Activated T-helper 1 cell treated with anti-CD3 and anti-CD28 coated beads, Interleukin-12 subunit alpha, Interleukin-12 subunit beta, Interleukin-2, Interleukin-4 antibody, amounts not matched to agents 30 ng/mL and 10 ng/mL and 1 ng/mL, durations not matched to agents 14 hours and 24 hours and 36 hours (primary cell): ENCODE measurements at regions of chrX and their contacts with region 1.

Region 1: DNA sequence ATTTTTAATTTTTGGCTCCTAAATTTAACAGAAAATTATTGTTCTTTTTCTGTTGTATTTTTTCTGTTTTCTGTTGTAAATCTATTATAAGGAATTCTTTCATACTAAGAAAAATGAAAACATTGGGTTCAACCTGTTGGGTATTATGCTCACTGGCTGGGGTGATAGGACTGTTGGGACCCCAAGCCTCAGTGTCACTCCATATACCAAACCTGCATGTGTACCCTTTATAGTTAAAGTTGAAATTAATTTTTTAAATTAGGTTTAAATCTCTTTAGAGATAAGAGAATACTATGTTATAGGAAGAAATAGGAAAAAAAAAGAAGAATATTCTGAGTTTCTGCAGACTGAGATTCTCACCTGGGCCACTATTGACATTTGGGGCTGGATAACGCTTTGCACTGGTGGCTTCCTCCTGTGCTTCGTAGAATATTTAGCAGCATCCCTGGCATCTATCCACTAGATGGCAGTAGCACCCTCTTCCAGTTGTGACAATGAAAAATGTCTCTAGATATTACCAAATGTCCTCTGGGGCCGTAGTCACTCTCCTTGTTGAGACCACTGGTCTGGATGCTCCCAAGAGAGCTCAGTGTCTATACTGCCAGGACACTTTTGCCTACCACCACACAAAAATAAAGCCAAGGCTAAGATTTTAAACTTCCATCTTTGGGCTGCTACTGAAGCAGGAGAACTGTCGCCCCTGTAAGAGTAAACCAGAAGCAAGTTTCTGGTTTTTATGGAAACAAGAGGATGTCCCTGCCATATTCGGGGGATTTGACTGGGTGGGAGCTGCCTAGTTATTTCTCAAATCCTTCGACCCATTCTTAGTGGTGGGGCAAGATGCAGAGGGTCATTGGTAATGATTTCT is 22.4 kb upstream of the CLTRN start:
- DNase-seq: peak; percentile 27
- H3K4me3 Mint-ChIP-seq: no peak overlapping the region
- H3K27ac Mint-ChIP-seq: no peak overlapping the region
- H3K4me1 Mint-ChIP-seq: peaks cover 9% of the 10 kb centered on the region
- H3K27me3 Mint-ChIP-seq: no peaks in the 10 kb centered on the region

Region 2: GRCh38 chrX:15468036-15468435 is 219.0 kb before region 1 on chrX:
- intact Hi-C with region 1: no loop called
- DNase-seq: no peak
- H3K4me3 Mint-ChIP-seq: no peak overlapping the region
- H3K27ac Mint-ChIP-seq: no peak overlapping the region
- H3K4me1 Mint-ChIP-seq: peaks cover 6% of the 10 kb centered on the region
- H3K27me3 Mint-ChIP-seq: no peaks in the 10 kb centered on the region

Region 3: GRCh38 chrX:15815779-15816437 is 128.9 kb after region 1 on chrX:
- intact Hi-C with region 1: loop called (anchors 5 kb)
- DNase-seq: peak; percentile 8
- H3K4me3 Mint-ChIP-seq: no peak overlapping the region
- H3K27ac Mint-ChIP-seq: peak overlapping the region; percentile 58
- H3K4me1 Mint-ChIP-seq: peaks cover 47% of the 10 kb centered on the region
- H3K27me3 Mint-ChIP-seq: no peaks in the 10 kb centered on the region

Region 4: DNA sequence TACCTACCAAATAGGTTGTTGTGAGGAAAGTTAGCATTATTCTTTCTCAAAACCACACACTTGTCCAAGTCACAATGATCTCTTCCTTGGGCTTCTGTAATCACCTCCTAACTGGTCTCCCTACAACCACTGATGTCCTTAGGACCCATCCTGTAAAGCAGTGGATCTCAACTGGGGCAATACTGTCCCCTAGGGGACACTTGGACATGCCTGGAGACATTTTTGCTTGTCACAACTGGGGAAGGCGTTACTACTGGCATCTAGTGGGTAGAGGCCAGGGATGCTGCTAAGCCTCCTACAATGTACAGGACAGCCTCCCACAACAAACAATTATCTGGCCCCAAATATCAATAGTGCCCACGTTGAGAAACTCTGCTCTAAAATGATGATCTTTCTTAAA is 286.2 kb after region 1 on chrX:
- intact Hi-C with region 1: loop called (anchors 2 kb)
- DNase-seq: no peak
- H3K4me3 Mint-ChIP-seq: no peak overlapping the region
- H3K27ac Mint-ChIP-seq: no peak overlapping the region
- H3K4me1 Mint-ChIP-seq: no peaks in the 10 kb centered on the region
- H3K27me3 Mint-ChIP-seq: no peaks in the 10 kb centered on the region

Region 5: GRCh38 chrX:16445166-16445752 is 758.2 kb after region 1 on chrX:
- intact Hi-C with region 1: loop called (anchors 5 kb)
- DNase-seq: peak; percentile 4
- H3K4me3 Mint-ChIP-seq: no peak overlapping the region
- H3K27ac Mint-ChIP-seq: no peak overlapping the region
- H3K4me1 Mint-ChIP-seq: no peaks in the 10 kb centered on the region
- H3K27me3 Mint-ChIP-seq: peaks cover 4% of the 10 kb centered on the region

Region 6: GRCh38 chrX:16695079-16695676 is 1008.1 kb after region 1 on chrX:
- intact Hi-C with region 1: loop called (anchors 10 kb)
- DNase-seq: peak; percentile 25
- H3K4me3 Mint-ChIP-seq: no peak overlapping the region
- H3K27ac Mint-ChIP-seq: no peak overlapping the region
- H3K4me1 Mint-ChIP-seq: no peaks in the 10 kb centered on the region
- H3K27me3 Mint-ChIP-seq: no peaks in the 10 kb centered on the region